Activated CD8-positive, alpha-beta T cell treated with anti-CD3 and anti-CD28 coated beads for 36 hours (primary cell): ENCODE measurements at regions of chr14 and their contacts with region 1.

Region 1: DNA sequence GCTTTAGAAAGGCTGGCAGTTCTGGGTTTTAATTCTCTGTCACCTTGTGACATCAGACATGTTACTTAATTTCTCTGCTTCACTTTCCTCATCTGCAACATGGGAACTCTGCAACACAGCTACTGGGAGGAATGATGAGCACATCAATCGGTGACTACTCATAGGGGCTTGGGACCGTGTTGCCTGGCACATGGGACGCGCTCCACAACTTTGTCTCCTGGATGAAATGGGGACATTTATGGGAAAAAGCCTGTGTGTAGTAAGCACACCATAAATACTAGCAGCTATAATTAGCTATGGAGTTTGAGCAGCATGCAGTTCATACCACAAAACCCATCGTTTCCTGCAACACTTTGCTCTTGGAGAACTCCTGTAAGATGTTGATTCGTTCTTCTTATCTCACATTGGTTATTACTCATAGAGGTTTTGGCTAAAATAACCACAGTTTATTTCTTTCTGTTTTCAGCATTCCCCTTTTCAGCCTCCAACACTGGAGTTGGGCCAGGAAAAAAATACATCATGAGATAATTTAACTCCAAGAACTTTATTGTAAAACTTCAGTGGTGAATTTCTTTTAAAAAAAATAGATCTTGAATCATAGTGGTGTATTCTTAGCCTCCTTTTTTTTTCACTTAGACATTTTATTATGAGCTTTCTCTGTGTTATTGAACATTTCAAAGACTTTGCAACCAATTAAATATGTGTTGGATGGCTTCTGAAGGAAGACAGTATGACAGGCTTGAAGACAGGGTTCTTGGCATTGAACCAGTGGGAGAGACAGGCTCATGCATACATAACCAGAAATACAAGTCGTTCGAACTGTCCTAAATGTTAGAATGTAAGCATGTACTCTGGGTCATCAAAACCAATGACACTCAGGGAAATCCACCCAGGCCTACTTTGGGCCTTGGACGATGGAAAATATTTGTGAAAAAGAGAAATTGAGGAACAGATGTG is 72.7 kb downstream of the RIN3 start:
- DNase-seq: peak; percentile 64
- ATAC-seq: peak; percentile 57
- H3K4me3 Mint-ChIP-seq: peak overlapping the region; percentile 41
- H3K27ac Mint-ChIP-seq: peak overlapping the region; percentile 95
- H3K4me1 Mint-ChIP-seq: peaks cover 95% of the 10 kb centered on the region
- H3K27me3 Mint-ChIP-seq: no peaks in the 10 kb centered on the region
- CTCF ChIP-seq: no peak

Region 2: GRCh38 chr14:92556255-92556741 is 30.0 kb before region 1 on chr14:
- CTCF ChIA-PET with region 1: interaction called, 4 read pairs
- POLR2A ChIA-PET with region 1: interaction called, 6 read pairs
- intact Hi-C with region 1: loop called (anchors 2 kb)
- DNase-seq: peak; percentile 53
- ATAC-seq: peak; percentile 60
- H3K4me3 Mint-ChIP-seq: peak overlapping the region; percentile 42
- H3K27ac Mint-ChIP-seq: peak overlapping the region; percentile 95
- H3K4me1 Mint-ChIP-seq: peaks cover 88% of the 10 kb centered on the region
- H3K27me3 Mint-ChIP-seq: no peaks in the 10 kb centered on the region
- CTCF ChIP-seq: no peak

Region 3: DNA sequence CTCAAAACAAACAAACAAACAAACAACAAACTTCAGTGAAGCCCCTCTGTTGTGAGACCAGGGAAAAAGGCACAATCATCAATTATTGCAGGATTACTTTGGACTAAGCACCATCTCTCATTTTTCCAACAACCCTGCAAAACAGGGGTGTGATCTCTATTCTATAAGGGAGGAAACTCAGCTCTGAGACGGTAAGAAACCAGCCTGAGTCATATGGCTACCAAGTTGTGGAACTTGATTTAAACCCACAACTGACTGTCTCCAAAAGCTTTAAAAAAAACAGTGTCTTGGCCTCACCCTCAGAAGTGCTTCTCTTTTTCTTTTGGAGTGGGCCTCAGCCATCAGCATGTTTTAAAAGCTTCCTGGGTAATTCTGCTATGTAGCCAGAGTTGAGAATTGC is 22.9 kb before region 1 on chr14:
- CTCF ChIA-PET with region 1: interaction called, 14 read pairs
- POLR2A ChIA-PET with region 1: interaction called, 6 read pairs
- intact Hi-C with region 1: no loop called
- DNase-seq: peak; percentile 62
- ATAC-seq: peak; percentile 77
- H3K4me3 Mint-ChIP-seq: no peak overlapping the region
- H3K27ac Mint-ChIP-seq: peak overlapping the region; percentile 82
- H3K4me1 Mint-ChIP-seq: peaks cover 71% of the 10 kb centered on the region
- H3K27me3 Mint-ChIP-seq: no peaks in the 10 kb centered on the region
- CTCF ChIP-seq: no peak

Region 4: GRCh38 chr14:92603309-92604242 is 17.3 kb after region 1 on chr14:
- CTCF ChIA-PET with region 1: interaction called, 25 read pairs
- POLR2A ChIA-PET with region 1: interaction called, 3 read pairs
- intact Hi-C with region 1: no loop called
- DNase-seq: peak; percentile 56
- ATAC-seq: peak; percentile 80
- H3K4me3 Mint-ChIP-seq: no peak overlapping the region
- H3K27ac Mint-ChIP-seq: no peak overlapping the region
- H3K4me1 Mint-ChIP-seq: peaks cover 41% of the 10 kb centered on the region
- H3K27me3 Mint-ChIP-seq: no peaks in the 10 kb centered on the region
- CTCF ChIP-seq: peak; percentile 38

Region 5: DNA sequence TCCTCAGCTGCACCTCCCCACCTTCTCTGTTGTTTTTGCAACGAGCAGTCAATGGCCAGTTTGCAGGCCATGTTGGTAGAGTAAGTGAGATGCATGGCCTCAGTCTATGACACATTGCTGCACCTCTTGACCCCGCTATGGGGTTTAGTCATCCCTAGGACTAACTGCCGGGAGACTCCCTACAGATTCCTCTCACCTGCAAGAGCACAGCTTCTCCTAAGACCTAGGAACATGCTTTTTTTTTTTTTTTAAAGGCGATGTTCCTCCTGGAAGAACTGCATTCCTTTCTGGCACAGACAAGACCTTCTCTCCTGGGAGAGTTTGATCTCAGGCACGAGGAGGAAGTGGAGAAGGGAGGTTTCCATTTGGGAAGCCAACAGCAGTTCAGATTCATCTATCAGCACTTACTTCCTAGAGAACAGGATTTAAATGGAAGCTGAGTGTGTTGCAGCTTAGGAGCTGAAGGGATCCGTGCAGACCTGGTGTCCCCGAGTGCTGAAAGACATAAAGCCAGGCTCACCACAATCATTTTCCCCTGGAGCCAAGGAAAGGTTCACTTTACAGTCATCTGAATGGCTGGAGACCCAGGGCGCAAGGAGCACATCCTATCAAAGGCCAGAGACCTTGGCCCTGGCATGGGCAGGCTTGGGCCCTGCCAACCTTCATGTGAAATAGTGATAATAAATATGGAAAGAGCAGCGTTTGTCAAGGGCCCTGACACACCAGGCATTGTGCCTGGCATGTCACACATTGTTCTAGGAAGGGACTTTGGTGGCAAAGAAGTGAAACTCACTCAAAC is 58.1 kb after region 1 on chr14:
- CTCF ChIA-PET with region 1: no interaction called
- POLR2A ChIA-PET with region 1: no interaction called
- intact Hi-C with region 1: no loop called
- DNase-seq: no peak
- ATAC-seq: no peak
- H3K4me3 Mint-ChIP-seq: no peak overlapping the region
- H3K27ac Mint-ChIP-seq: no peak overlapping the region
- H3K4me1 Mint-ChIP-seq: peaks cover 40% of the 10 kb centered on the region
- H3K27me3 Mint-ChIP-seq: no peaks in the 10 kb centered on the region
- CTCF ChIP-seq: no peak